CD8-positive, alpha-beta memory T cell (primary cell): ENCODE measurements at regions of chr2 and their contacts with region 1.

Region 1: DNA sequence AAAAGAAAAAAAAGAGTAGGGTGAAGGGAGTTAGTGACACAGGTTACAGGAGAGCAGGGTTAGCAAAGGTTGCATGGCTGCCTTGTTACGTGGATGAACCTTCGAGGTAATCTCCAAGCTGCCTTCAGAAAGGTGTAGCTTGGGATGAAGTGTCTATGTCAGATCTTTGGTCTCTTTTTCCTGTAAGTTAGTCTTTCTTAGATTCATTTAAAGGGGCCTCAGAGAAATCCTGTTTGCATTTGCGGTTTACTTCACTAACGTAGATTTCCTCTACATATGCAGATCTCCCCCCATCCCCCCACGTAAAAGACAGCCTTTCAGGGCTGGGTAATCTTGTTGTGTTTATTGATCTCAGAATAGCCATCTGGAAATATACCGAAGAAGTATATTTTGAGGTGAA is 83.7 kb downstream of the MTA3 start:
- DNase-seq: peak in 2 of 5 donors; percentile 8 to 81
- H3K4me3 ChIP-seq: peak overlapping the region; percentile 8
- H3K4me3 Mint-ChIP-seq: peak overlapping the region in 6 of 7 donors; percentile 6 to 69 (median 44)
- H3K27ac ChIP-seq: no peak overlapping the region
- H3K27ac Mint-ChIP-seq: peak overlapping the region in 7 of 8 donors; percentile 9 to 95 (median 62)
- H3K4me1 ChIP-seq: peaks cover 48% of the 10 kb centered on the region
- H3K4me1 Mint-ChIP-seq: peaks cover 20 to 51% (median 36%) of the 10 kb centered on the region in 3 donors
- H3K27me3 ChIP-seq: no peaks in the 10 kb centered on the region
- H3K27me3 Mint-ChIP-seq: no peaks in the 10 kb centered on the region

Region 2: GRCh38 chr2:42663106-42663780 is 11.2 kb after region 1 on chr2:
- CTCF ChIA-PET with region 1: interaction called, 11 read pairs
- POLR2A ChIA-PET with region 1: no interaction called
- DNase-seq: peak; percentile 17 to 73 (median 47)
- H3K4me3 ChIP-seq: no peak overlapping the region
- H3K4me3 Mint-ChIP-seq: peak overlapping the region in 1 of 7 donors; percentile 43
- H3K27ac ChIP-seq: no peak overlapping the region
- H3K27ac Mint-ChIP-seq: peak overlapping the region in 2 of 8 donors; percentile 20 to 47
- H3K4me1 ChIP-seq: peaks cover 11% of the 10 kb centered on the region
- H3K4me1 Mint-ChIP-seq: peaks cover 0 to 3% (median 3%) of the 10 kb centered on the region in 3 donors
- H3K27me3 ChIP-seq: no peaks in the 10 kb centered on the region
- H3K27me3 Mint-ChIP-seq: no peaks in the 10 kb centered on the region

Region 3: DNA sequence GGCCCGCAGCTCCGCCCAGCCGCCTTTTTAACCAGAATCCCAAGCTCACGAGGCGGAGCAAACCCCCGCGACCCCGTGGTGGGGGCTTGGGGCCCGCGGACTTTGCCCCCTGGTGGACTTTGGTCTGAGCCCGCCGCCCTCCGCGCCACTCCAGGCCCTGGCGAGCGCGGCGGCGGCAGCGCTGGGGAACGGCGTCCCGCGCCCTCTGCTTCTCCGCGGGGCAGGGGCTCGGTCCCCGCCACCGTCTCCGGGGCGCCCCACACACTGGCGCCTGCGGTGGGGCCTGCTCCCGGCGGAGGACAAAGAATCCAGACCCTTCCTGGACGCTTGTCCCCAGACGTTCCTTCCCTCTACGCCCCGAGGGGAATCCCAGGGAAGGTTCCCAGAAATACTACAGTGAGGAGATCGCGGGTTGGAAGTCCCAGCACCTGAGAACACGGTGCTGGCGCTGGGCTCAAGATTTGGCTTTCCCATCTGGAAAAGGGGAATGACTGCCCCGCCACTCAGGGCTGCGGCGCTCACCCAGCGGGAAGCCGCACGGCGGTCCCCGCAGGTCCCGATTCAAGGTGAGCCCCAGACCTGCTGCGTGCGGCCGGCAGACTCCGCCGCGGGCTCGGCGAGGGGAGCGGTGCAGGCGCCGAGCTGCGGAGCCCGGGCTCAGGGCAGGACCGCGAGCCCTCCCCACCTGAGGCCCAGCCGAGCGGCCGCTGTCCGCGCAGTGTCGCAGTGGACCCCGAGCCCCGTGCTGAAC is 140.7 kb after region 1 on chr2 and contains the start of gene HAAO:
- CTCF ChIA-PET with region 1: no interaction called
- POLR2A ChIA-PET with region 1: no interaction called
- DNase-seq: no peak
- H3K4me3 ChIP-seq: no peak within 1 kb of the TSS
- H3K4me3 Mint-ChIP-seq: peak within 1 kb of the TSS in 6 of 7 donors; percentile 56 to 81 (median 76)
- H3K27ac ChIP-seq: no peak within 1 kb of the TSS
- H3K27ac Mint-ChIP-seq: peak within 1 kb of the TSS in 2 of 8 donors; percentile 18 to 77
- H3K4me1 ChIP-seq: no peaks in the 10 kb centered on the region
- H3K4me1 Mint-ChIP-seq: peaks cover 15 to 24% (median 21%) of the 10 kb centered on the region in 3 donors
- H3K27me3 ChIP-seq: peaks cover 21% of the 10 kb centered on the region
- H3K27me3 Mint-ChIP-seq: peaks cover 38 to 54% of the 10 kb centered on the region in 2 donors
- total RNA-seq, gene HAAO: 0.27 to 0.35 TPM